GM13976 (cell line): ENCODE measurements at regions of chr9 and their contacts with region 1.

Region 1: GRCh38 chr9:17063535-17064135 is 71.2 kb upstream of the CNTLN start:
- DNase-seq: no peak
- CTCF ChIP-seq: peak; percentile 40

Region 2: GRCh38 chr9:16848179-16848578 is 215.5 kb before region 1 on chr9:
- in situ Hi-C with region 1: no loop called
- DNase-seq: no peak
- CTCF ChIP-seq: no peak

Region 3: DNA sequence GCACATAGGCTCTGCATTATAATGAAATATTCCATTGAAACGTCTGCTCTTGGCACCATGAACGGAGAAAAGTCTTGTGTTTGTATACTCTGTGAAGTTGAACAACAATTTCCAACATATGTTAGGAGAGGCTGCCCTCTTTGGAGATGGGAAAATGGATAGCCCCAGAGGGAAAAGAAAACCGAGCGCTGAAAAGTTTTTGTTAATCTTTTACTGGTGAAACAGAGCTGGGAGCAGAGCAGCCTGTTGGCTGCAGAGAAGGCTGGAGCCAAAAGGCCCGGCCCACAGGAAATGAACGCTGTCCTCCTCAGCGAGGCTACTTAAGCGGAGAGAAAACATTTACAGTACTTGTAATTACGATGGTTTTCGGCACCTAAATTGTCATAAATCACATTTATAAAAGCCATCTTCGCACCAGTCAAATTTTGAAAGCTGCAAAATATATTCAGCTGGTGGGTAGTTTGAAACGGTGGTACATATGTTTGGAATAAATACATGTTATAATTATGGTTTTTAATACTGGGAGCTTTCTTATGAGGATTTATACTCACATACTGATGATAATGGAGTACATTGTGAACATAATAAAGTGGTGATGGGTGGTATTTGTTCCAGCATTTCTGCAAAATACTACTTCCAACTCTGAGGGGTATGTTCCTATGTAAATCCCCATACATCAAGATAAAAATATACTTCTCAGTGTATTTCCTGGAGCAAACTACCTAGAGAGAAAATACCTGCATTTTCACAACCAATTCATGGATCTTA is 58.4 kb before region 1 on chr9:
- in situ Hi-C with region 1: no loop called
- DNase-seq: no peak
- CTCF ChIP-seq: no peak

Region 4: GRCh38 chr9:17462869-17463464 is 399.3 kb after region 1 on chr9:
- in situ Hi-C with region 1: loop called (anchors 25 kb)
- DNase-seq: peak; percentile 19
- CTCF ChIP-seq: peak; percentile 53

Region 5: GRCh38 chr9:17627641-17628040 is 564.0 kb after region 1 on chr9:
- in situ Hi-C with region 1: no loop called
- DNase-seq: no peak
- CTCF ChIP-seq: no peak